GM12878 (cell line): ENCODE measurements at regions of chr4 and their contacts with region 1.

Region 1: DNA sequence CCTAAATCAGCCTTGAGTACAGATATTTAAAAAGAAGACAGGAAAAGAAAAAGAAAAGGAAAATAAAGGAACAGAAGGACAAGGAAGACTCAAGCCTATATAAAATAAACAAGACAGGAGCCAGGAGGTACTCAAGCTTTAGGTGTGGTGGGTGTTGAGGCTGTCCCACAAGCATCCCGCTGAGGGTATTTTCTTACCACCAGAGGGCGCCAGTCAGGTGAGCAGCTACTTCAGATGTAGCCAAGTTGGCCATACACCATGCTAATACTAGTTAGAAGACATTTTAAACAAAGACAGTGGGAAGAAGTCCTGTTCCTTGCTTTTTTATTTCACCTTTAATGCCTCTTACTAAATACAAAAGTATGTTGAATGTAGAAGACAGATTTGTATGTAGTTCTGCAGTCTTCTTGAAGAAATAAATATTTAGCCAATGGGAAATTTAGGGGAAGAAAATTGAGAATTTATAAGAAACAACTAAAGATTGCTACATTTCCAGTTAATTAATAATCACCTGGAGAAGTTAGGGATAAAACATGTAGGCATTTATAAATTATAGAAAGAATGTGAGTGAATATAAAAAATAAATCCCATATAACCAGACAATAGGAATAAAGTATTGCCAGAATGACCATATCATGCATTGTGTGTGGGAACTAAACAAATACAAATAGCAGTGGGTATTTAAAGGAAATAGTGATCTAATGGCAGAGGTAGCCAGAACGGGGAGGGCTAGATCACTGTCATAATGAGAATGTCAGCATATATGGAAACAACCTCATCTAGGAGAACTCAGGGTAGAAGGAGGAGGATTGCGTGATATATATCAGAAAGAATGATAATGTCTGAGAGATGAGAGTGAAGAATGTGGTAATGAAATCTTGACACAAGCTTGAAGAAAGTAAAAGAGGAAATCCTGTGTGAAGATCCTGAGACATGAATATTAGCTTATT is 71.0 kb downstream of the MTHFD2L start:
- DNase-seq: no peak
- ATAC-seq: peak; percentile 100
- H3K4me3 ChIP-seq: no peak overlapping the region
- H3K27ac ChIP-seq: no peak overlapping the region
- H3K4me1 ChIP-seq: peaks cover 6% of the 10 kb centered on the region; the same call in 1 of the 2 replicates
- H3K27me3 ChIP-seq: no peaks in the 10 kb centered on the region
- CTCF ChIP-seq: peak; percentile 73 to 85 (median 85)
- EP300 ChIP-seq: no peak
- POLR2A ChIP-seq: no peak
- RAD21 ChIP-seq: peak; percentile 65

Region 2: GRCh38 chr4:73984736-73985527 is 244.0 kb before region 1 on chr4:
- CTCF ChIA-PET with region 1: no interaction called
- POLR2A ChIA-PET with region 1: no interaction called
- RAD21 ChIA-PET with region 1: no interaction called
- SMC1A ChIA-PET with region 1: no interaction called
- in situ Hi-C with region 1: no loop called
- intact Hi-C with region 1: no loop called
- DNase-seq: no peak
- ATAC-seq: no peak
- H3K4me3 ChIP-seq: no peak overlapping the region
- H3K27ac ChIP-seq: no peak overlapping the region
- H3K4me1 ChIP-seq: no peaks in the 10 kb centered on the region
- H3K27me3 ChIP-seq: no peaks in the 10 kb centered on the region; a peak in 2 of 4 replicates
- CTCF ChIP-seq: no peak
- EP300 ChIP-seq: no peak
- POLR2A ChIP-seq: no peak
- RAD21 ChIP-seq: no peak

Region 3: DNA sequence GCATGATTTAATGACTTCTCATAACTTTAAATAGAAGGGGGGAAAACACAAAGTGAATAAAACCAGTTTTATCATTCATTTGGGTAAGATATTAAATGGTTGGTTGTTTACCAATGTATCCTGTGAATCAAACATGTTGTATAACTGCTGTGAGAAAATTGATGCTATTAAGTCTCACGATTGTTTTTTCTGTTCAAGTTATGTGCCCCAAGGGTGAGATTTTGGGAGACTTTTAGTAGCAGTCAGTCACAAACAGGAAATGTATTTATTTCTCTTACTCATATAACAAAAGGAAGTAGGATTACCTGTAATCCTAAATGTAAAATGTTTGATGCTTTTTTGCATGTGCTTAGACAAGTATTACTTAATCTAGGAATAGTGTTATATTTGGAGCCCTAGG is 31.9 kb before region 1 on chr4:
- CTCF ChIA-PET with region 1: interaction called, 48 read pairs
- POLR2A ChIA-PET with region 1: no interaction called
- RAD21 ChIA-PET with region 1: interaction called, 5 read pairs
- SMC1A ChIA-PET with region 1: interaction called, 15 read pairs
- in situ Hi-C with region 1: no loop called
- intact Hi-C with region 1: no loop called
- DNase-seq: peak; percentile 21
- ATAC-seq: peak; percentile 34; the same call in 2 of the 3 replicates
- H3K4me3 ChIP-seq: no peak overlapping the region
- H3K27ac ChIP-seq: peak overlapping the region; percentile 58
- H3K4me1 ChIP-seq: peaks cover 18% of the 10 kb centered on the region
- H3K27me3 ChIP-seq: no peaks in the 10 kb centered on the region
- CTCF ChIP-seq: no peak
- EP300 ChIP-seq: no peak
- POLR2A ChIP-seq: no peak
- RAD21 ChIP-seq: no peak

Region 4: DNA sequence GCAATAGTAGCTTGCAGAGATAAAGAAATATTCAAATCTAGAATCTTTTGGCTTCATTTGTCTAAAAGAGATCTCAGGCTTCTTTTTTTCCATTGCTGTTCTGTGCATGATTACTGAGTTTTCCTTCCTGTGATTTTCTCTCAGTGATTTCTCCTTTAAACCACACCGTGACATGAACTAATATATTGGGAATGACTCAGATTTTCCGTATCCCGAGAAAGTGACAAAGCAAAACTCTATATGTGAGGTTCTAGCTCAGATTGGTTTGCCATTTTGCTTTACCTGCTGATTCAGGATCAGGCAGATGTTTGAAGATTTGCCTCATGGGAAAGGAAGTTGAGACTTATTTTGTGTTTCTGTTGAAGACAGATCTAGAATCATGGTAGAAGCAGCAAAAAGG is 11.6 kb before region 1 on chr4:
- CTCF ChIA-PET with region 1: interaction called, 48 read pairs
- POLR2A ChIA-PET with region 1: no interaction called
- RAD21 ChIA-PET with region 1: interaction called, 5 read pairs
- SMC1A ChIA-PET with region 1: interaction called, 5 read pairs
- in situ Hi-C with region 1: no loop called
- intact Hi-C with region 1: no loop called
- DNase-seq: no peak
- ATAC-seq: no peak
- H3K4me3 ChIP-seq: no peak overlapping the region
- H3K27ac ChIP-seq: no peak overlapping the region
- H3K4me1 ChIP-seq: no peaks in the 10 kb centered on the region
- H3K27me3 ChIP-seq: no peaks in the 10 kb centered on the region
- CTCF ChIP-seq: no peak
- EP300 ChIP-seq: no peak
- POLR2A ChIP-seq: no peak
- RAD21 ChIP-seq: no peak

Region 5: DNA sequence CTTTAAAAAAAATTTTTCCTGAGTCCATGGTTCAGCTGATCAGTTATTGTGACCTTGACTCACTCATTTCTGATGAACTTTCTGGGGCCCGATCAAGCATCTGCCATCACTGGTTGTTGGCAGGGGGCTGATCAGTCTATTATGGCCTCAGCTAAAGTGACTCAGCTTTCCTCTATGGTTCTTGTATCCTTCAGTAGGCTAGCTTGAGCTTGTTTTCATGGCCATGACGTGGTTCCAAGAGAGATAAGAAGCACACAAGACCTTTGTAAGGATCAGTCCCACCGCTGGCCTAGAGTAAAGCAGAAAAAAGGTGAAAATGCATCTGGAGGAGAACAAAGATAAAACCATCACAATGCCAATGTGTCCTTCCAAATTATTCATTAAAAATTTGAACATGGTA is 49.5 kb after region 1 on chr4:
- CTCF ChIA-PET with region 1: interaction called, 12 read pairs
- POLR2A ChIA-PET with region 1: no interaction called
- RAD21 ChIA-PET with region 1: no interaction called
- SMC1A ChIA-PET with region 1: interaction called, 4 read pairs
- in situ Hi-C with region 1: no loop called
- intact Hi-C with region 1: no loop called
- DNase-seq: no peak
- ATAC-seq: no peak
- H3K4me3 ChIP-seq: no peak overlapping the region
- H3K27ac ChIP-seq: no peak overlapping the region
- H3K4me1 ChIP-seq: no peaks in the 10 kb centered on the region
- H3K27me3 ChIP-seq: no peaks in the 10 kb centered on the region
- CTCF ChIP-seq: no peak
- EP300 ChIP-seq: no peak
- POLR2A ChIP-seq: no peak
- RAD21 ChIP-seq: no peak

Region 6: DNA sequence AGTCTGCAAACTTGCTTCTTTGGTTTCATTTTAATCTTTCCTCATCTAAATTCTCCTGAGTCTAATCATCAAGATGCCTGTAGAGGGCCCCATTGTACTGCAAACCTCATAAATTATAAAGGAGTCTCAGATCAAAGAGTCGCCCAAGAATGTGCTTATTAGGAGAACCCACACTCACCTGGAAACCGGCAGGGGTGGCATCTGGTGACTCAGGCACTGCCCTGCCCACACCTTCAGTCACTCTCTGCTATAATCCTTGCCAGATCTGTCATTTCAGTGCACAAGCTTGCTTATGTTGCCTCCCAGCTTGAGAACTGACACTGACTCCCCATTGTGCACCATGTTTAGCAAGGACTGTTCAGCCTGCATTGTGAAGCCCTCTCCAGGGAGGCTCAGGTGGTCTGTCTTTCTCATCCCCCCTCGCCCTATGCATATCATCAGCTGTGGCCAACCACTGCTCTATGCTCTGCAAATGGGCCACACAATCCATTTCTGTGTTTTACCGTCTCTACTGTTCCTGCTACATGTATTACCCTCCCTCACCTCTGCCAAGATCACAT is 91.7 kb after region 1 on chr4:
- CTCF ChIA-PET with region 1: interaction called, 20 read pairs
- POLR2A ChIA-PET with region 1: no interaction called
- RAD21 ChIA-PET with region 1: interaction called, 3 read pairs
- SMC1A ChIA-PET with region 1: interaction called, 7 read pairs
- in situ Hi-C with region 1: no loop called
- intact Hi-C with region 1: no loop called
- DNase-seq: peak; percentile 9
- ATAC-seq: peak; percentile 90
- H3K4me3 ChIP-seq: no peak overlapping the region
- H3K27ac ChIP-seq: no peak overlapping the region
- H3K4me1 ChIP-seq: no peaks in the 10 kb centered on the region
- H3K27me3 ChIP-seq: 0 out of 4 replicates have a peak, but pooled peaks cover 0 to 3% of the 10 kb centered on the region in 2 experiments
- CTCF ChIP-seq: peak; percentile 39 to 58 (median 50); a peak in 5 of 6 replicates
- EP300 ChIP-seq: no peak
- POLR2A ChIP-seq: no peak
- RAD21 ChIP-seq: peak; percentile 89

Region 7: DNA sequence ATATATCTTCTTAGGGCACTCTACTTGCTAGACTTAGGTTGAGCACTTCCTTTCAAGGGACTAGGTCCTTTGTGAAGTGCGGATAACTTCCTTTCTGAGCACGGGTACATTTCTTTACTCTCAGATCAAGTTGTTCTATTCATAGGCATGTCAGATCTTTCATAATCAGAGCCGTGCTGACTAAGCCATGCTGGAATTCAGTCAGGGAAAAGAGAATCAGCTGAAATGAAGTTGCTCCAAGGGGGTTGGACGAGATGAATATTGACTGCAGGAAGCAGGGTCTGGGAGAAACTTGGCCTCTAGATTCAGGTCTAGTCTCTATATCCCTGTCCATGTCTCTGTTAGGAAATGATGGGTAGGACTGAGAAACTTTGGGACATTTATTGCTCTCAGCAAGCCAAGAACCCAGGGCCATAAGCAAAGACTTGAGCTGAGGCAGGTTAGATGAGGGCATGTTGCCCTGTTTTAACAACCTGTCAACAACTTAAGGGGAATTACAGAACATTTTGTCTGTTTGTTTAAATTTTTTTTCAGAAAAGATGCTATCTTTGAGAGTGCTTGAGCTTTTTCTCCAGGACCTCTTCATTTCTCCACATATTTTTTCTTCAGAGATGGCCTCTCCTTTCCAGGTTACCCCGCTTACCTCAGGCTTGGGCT is 244.3 kb after region 1 on chr4:
- CTCF ChIA-PET with region 1: no interaction called
- POLR2A ChIA-PET with region 1: no interaction called
- RAD21 ChIA-PET with region 1: no interaction called
- SMC1A ChIA-PET with region 1: no interaction called
- in situ Hi-C with region 1: no loop called
- intact Hi-C with region 1: no loop called
- DNase-seq: no peak
- ATAC-seq: no peak
- H3K4me3 ChIP-seq: no peak overlapping the region
- H3K27ac ChIP-seq: no peak overlapping the region
- H3K4me1 ChIP-seq: no peaks in the 10 kb centered on the region
- H3K27me3 ChIP-seq: no peaks in the 10 kb centered on the region
- CTCF ChIP-seq: no peak
- EP300 ChIP-seq: no peak
- POLR2A ChIP-seq: no peak
- RAD21 ChIP-seq: no peak